ENCODE measurements at regions of chrX and their contacts with region 1.

Region 1: GRCh38 chrX:38985375-38985774 is 184.1 kb downstream of the MID1IP1 start:
- DNase-seq: no peak
- ATAC-seq: peak; percentile 84
- H3K4me3 ChIP-seq: no peak overlapping the region
- H3K27ac ChIP-seq: no peak overlapping the region
- H3K4me1 ChIP-seq: no peaks in the 10 kb centered on the region
- H3K27me3 ChIP-seq: no peaks in the 10 kb centered on the region
- CTCF ChIP-seq: peak in 2 of 3 experiments; percentile 15 to 22; a peak in 1 of 6 replicates
- EP300 ChIP-seq: no peak
- POLR2A ChIP-seq: no peak
- RAD21 ChIP-seq: peak; percentile 59

Region 2: DNA sequence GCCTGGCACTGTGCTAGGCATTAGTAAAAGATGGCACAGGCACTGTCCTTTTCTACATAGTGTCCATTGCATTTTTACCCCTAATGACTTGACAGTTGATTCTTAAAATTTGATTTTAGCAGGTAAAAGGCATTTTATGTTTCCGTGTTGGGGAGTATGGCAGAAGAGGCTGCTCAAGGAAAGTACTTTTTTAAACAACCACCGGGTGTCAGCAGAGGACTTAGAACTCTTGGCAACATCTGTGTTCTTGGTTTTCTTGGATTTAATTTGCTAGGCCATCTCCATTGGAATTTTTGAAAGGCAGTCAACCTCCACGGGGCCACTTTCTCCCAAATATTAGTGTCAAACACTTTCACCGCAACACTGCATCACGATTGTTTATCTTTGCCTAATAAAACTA is 321.1 kb before region 1 on chrX:
- CTCF ChIA-PET with region 1: no interaction called
- POLR2A ChIA-PET with region 1: no interaction called
- RAD21 ChIA-PET with region 1: interaction called, 3 read pairs
- SMC1A ChIA-PET with region 1: interaction called, 4 read pairs
- in situ Hi-C with region 1: no loop called
- intact Hi-C with region 1: loop called (anchors 2 kb)
- DNase-seq: no peak
- ATAC-seq: peak; percentile 54
- H3K4me3 ChIP-seq: no peak overlapping the region
- H3K27ac ChIP-seq: no peak overlapping the region
- H3K4me1 ChIP-seq: peaks cover 8% of the 10 kb centered on the region; the same call in 1 of the 2 replicates
- H3K27me3 ChIP-seq: no peaks in the 10 kb centered on the region; a peak in 1 of 4 replicates
- CTCF ChIP-seq: peak; percentile 25 to 56 (median 33); a peak in 3 of 6 replicates
- EP300 ChIP-seq: no peak
- POLR2A ChIP-seq: no peak
- RAD21 ChIP-seq: peak; percentile 57

Region 3: GRCh38 chrX:38754102-38754790 is 231.1 kb before region 1 on chrX:
- CTCF ChIA-PET with region 1: interaction called, 6 read pairs
- POLR2A ChIA-PET with region 1: no interaction called
- RAD21 ChIA-PET with region 1: no interaction called
- SMC1A ChIA-PET with region 1: interaction called, 4 read pairs
- in situ Hi-C with region 1: no loop called
- intact Hi-C with region 1: loop called (anchors 5 kb)
- DNase-seq: peak; percentile 31
- ATAC-seq: peak; percentile 82
- H3K4me3 ChIP-seq: no peak overlapping the region
- H3K27ac ChIP-seq: no peak overlapping the region
- H3K4me1 ChIP-seq: no peaks in the 10 kb centered on the region
- H3K27me3 ChIP-seq: no peaks in the 10 kb centered on the region
- CTCF ChIP-seq: peak; percentile 59 to 70 (median 65); a peak in 5 of 6 replicates
- EP300 ChIP-seq: no peak
- POLR2A ChIP-seq: no peak
- RAD21 ChIP-seq: peak; percentile 79

Region 4: GRCh38 chrX:38768079-38768478 is 217.3 kb before region 1 on chrX:
- CTCF ChIA-PET with region 1: interaction called, 23 read pairs
- POLR2A ChIA-PET with region 1: no interaction called
- RAD21 ChIA-PET with region 1: interaction called, 17 read pairs
- SMC1A ChIA-PET with region 1: interaction called, 20 read pairs
- in situ Hi-C with region 1: loop called (anchors 5 kb)
- intact Hi-C with region 1: loop called (anchors 1 kb)
- DNase-seq: no peak
- ATAC-seq: peak; percentile 62
- H3K4me3 ChIP-seq: no peak overlapping the region
- H3K27ac ChIP-seq: no peak overlapping the region
- H3K4me1 ChIP-seq: no peaks in the 10 kb centered on the region
- H3K27me3 ChIP-seq: no peaks in the 10 kb centered on the region
- CTCF ChIP-seq: peak; percentile 30 to 57 (median 31); a peak in 4 of 6 replicates
- EP300 ChIP-seq: no peak
- POLR2A ChIP-seq: no peak
- RAD21 ChIP-seq: peak; percentile 72

Region 5: DNA sequence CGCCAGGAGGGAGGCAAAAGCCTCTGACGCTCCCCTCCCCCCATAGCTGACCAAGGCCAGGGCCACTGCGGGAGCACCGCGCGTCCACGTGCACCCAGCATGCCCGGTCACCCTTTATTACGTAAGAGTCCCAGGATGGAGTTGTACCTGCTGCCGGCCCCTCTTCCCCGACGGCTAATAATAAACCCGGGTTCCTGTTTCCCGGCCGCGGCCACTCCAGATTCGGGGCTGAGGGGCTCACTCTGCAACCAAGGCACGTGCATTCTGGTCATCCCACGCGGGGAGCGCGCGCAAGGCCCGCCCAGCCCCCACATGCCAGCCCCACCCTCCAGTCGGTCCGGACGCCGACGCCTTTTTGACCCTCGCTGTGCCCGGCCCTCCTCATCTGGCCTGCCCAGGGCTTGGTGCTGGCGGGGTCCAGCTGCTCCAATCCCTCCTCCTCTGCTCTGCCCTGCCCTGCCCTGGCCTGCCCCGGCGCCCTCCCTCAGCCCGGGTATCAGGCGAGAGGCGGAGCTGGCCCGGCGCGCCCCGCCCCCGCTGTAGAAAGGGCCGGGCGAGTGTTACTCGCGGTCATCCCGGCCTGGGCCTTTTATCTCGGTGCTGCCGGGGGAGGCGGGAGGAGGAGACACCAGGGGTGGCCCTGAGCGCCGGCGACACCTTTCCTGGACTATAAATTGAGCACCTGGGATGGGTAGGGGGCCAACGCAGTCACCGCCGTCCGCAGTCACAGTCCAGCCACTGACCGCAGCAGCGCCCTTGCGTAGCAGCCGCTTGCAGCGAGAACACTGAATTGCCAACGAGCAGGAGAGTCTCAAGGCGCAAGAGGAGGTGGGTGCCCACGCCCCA is 181.6 kb before region 1 on chrX:
- CTCF ChIA-PET with region 1: interaction called, 10 read pairs
- POLR2A ChIA-PET with region 1: interaction called, 9 read pairs
- RAD21 ChIA-PET with region 1: interaction called, 19 read pairs
- SMC1A ChIA-PET with region 1: interaction called, 13 read pairs
- in situ Hi-C with region 1: no loop called
- intact Hi-C with region 1: loop called (anchors 2 kb)
- DNase-seq: no peak
- ATAC-seq: peak; percentile 78
- H3K4me3 ChIP-seq: peak overlapping the region; percentile 70
- H3K27ac ChIP-seq: peak overlapping the region; percentile 82
- H3K4me1 ChIP-seq: no peaks in the 10 kb centered on the region
- H3K27me3 ChIP-seq: no peaks in the 10 kb centered on the region
- CTCF ChIP-seq: no peak
- EP300 ChIP-seq: no peak
- POLR2A ChIP-seq: peak; percentile 84; the same call in 1 of the 2 replicates
- RAD21 ChIP-seq: no peak

Region 6: DNA sequence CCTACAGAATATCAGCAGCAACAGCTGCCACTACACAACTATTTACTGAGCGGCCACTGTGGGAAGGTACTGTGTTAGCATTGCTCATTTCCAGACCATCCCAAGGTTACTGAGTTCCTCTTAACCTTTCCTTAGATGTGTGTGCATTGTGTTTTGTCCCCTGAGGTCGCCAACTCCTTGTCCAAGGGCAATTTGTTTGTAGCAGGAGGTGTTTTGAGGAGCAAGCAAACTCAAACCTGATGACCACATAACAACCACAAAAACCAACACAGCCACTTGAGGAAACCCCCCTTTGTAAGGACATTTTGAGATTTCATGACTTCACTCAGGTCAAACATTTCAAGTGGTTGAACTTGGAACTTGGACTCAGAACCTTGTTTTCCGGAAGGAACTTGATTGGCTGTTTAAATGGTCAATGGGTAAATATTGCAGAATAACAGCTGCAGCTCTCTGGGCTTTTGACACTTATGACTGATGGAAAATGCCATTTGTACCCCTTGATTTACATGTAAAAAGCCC is 61.9 kb before region 1 on chrX:
- CTCF ChIA-PET with region 1: interaction called, 7 read pairs
- POLR2A ChIA-PET with region 1: no interaction called
- RAD21 ChIA-PET with region 1: interaction called, 6 read pairs
- SMC1A ChIA-PET with region 1: interaction called, 18 read pairs
- in situ Hi-C with region 1: no loop called
- intact Hi-C with region 1: loop called (anchors 1 kb)
- DNase-seq: peak; percentile 79
- ATAC-seq: peak; percentile 86
- H3K4me3 ChIP-seq: no peak overlapping the region
- H3K27ac ChIP-seq: no peak overlapping the region
- H3K4me1 ChIP-seq: no peaks in the 10 kb centered on the region; the same call in 1 of the 2 replicates
- H3K27me3 ChIP-seq: no peaks in the 10 kb centered on the region
- CTCF ChIP-seq: no peak
- EP300 ChIP-seq: 0 out of 4 replicates have a peak, but pooled peaks have one; percentile 19 to 34
- POLR2A ChIP-seq: no peak
- RAD21 ChIP-seq: no peak